Activated CD8-positive, alpha-beta T cell treated with anti-CD3 and anti-CD28 coated beads for 36 hours (primary cell): ENCODE measurements at regions of chr4 and their contacts with region 1.

Region 1: DNA sequence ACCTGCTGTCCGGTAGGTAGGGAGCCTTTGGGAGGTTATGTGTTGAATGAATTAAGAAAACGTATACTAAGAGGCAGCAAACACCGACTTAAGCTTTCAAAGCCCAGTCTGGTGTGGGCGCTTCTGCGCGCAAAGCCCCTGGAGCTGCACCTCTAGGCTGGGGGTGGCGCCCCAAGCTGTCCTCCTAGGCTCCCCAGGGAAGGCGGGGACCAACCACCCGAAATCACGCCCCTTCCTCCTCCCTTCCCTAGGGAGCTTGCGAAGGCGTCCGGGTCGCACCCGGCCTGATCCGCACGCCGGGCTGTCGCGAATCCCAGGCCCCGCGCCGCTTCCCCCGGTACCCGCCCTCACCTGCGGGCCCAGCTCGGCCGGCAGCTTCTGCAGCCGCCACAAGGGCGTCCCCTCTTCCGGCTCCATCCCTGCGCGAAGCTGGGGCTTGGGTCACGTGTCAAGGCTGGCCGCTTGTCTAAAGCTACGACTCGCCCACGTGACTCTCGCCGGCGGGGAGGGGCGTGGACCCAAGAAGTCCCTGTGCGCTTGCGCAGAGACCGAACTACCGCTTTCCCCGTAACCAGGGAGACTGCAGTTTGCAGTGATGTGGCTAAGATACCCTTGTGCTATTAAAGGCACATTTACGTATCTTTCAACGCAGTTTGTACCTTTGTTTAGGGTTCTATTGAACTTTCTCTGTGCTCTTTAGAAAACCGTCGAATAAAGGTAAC is at the start of gene COMMD8:
- DNase-seq: peak; percentile 99
- ATAC-seq: peak; percentile 98
- H3K4me3 Mint-ChIP-seq: peak within 1 kb of the TSS; percentile 86
- H3K27ac Mint-ChIP-seq: peak within 1 kb of the TSS; percentile 76
- H3K4me1 Mint-ChIP-seq: peaks cover 31% of the 10 kb centered on the region
- H3K27me3 Mint-ChIP-seq: no peaks in the 10 kb centered on the region
- CTCF ChIP-seq: peak; percentile 39
- total RNA-seq, gene COMMD8: 30.5 to 32.8 TPM

Region 2: GRCh38 chr4:46698891-46699290 is 764.5 kb before region 1 on chr4:
- CTCF ChIA-PET with region 1: no interaction called
- POLR2A ChIA-PET with region 1: no interaction called
- intact Hi-C with region 1: no loop called
- DNase-seq: no peak
- ATAC-seq: no peak
- H3K4me3 Mint-ChIP-seq: no peak overlapping the region
- H3K27ac Mint-ChIP-seq: no peak overlapping the region
- H3K4me1 Mint-ChIP-seq: no peaks in the 10 kb centered on the region
- H3K27me3 Mint-ChIP-seq: no peaks in the 10 kb centered on the region
- CTCF ChIP-seq: no peak

Region 3: GRCh38 chr4:47485047-47485692 is 21.8 kb after region 1 on chr4 and contains the start of gene ATP10D:
- CTCF ChIA-PET with region 1: interaction called, 16 read pairs
- POLR2A ChIA-PET with region 1: interaction called, 10 read pairs
- intact Hi-C with region 1: no loop called
- DNase-seq: peak; percentile 87
- ATAC-seq: peak; percentile 99
- H3K4me3 Mint-ChIP-seq: peak within 1 kb of the TSS; percentile 91
- H3K27ac Mint-ChIP-seq: peak within 1 kb of the TSS; percentile 87
- H3K4me1 Mint-ChIP-seq: peaks cover 19% of the 10 kb centered on the region
- H3K27me3 Mint-ChIP-seq: no peaks in the 10 kb centered on the region
- CTCF ChIP-seq: no peak
- total RNA-seq, gene ATP10D: 4.1 to 4.7 TPM

Region 4: GRCh38 chr4:47567511-47567910 is 104.1 kb after region 1 on chr4:
- CTCF ChIA-PET with region 1: interaction called, 13 read pairs
- POLR2A ChIA-PET with region 1: no interaction called
- intact Hi-C with region 1: no loop called
- DNase-seq: no peak
- ATAC-seq: no peak
- H3K4me3 Mint-ChIP-seq: no peak overlapping the region
- H3K27ac Mint-ChIP-seq: no peak overlapping the region
- H3K4me1 Mint-ChIP-seq: peaks cover under 1% of the 10 kb centered on the region
- H3K27me3 Mint-ChIP-seq: no peaks in the 10 kb centered on the region
- CTCF ChIP-seq: no peak

Region 5: GRCh38 chr4:48008021-48008596 is 544.7 kb after region 1 on chr4:
- CTCF ChIA-PET with region 1: no interaction called
- POLR2A ChIA-PET with region 1: no interaction called
- intact Hi-C with region 1: no loop called
- DNase-seq: no peak
- ATAC-seq: no peak
- H3K4me3 Mint-ChIP-seq: no peak overlapping the region
- H3K27ac Mint-ChIP-seq: no peak overlapping the region
- H3K4me1 Mint-ChIP-seq: no peaks in the 10 kb centered on the region
- H3K27me3 Mint-ChIP-seq: peaks cover 6% of the 10 kb centered on the region
- CTCF ChIP-seq: no peak